ENCODE measurements at regions of chr4 and their contacts with region 1.

Region 1: DNA sequence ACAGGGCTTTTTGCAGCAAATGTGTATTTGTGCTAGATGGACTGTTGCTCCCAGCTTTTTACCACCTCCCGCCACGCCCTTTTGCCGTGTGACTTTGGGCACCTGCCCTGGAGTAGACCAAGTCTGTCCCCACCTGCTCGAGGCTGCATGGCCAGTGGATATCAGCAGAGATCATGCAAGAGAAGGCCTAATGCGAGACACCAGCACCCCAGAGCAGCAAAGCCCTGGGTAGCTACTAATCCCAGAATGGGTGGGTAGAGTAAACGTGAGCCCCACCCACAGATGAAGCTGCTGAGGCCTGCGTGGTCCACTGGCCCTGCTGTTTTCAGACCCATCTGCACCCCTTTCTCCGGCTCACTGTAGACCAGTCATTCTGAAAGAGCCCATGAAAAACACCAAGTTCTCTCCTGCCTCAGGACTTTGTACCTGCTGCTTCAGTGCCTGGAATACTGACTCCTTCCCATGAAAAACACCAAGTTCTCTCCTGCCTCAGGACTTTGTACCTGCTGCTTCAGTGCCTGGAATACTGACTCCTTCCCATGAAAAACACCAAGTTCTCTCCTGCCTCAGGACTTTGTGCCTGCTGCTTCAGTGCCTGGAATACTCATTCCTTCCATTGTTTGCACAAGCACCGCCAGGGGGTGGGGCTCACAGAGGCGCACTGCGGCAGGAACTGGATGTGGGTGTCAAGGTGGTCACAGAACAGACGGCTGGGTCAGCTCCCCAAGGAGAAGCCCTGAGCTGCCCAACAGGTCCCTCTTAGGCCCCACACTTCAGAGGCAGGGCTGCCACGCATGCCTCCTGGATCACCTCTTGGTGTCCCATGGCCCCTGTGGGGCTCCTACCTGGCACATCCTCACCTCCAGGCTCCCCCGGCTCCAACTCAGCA is 5.1 kb upstream of the TNIP2 start:
- DNase-seq: peak in 1 of 10 donors; percentile 30
- H3K4me3 ChIP-seq: no peak overlapping the region
- H3K27ac ChIP-seq: no peak overlapping the region
- H3K27me3 ChIP-seq: no peaks in the 10 kb centered on the region
- CTCF ChIP-seq: no peak

Region 2: DNA sequence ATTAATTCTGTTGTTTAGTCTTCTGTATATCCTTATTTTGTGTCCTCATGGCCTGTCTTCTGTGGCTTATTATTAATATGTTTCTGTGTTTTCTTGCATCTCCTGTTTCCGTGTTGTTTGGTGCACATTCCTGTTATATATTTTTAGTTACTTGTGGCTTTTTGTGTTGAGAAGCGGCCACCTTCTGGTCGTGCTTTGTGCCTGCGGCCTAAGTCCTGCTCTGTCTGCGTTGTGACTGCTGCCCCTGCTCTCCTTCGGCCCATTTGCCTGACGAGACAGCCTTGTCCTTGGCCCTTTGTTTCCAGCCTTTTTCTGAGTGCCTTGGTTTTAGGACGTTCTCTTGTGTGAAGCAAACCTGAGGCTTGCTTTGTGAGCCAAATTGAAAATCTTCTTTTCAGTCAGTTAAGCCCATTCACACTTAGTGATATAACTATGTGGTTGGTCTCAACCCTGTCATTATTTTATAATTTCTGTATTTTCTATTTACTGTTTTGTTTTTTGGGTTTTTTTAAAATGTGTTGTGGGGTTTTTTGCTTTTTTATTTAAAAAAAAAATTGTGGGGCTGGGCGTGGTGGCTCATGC is 48.9 kb before region 1 on chr4:
- intact Hi-C with region 1: no loop called
- DNase-seq: no peak
- H3K4me3 ChIP-seq: no peak overlapping the region
- H3K27ac ChIP-seq: no peak overlapping the region
- H3K27me3 ChIP-seq: no peaks in the 10 kb centered on the region
- CTCF ChIP-seq: peak in 1 of 56 donors; percentile 14

Region 3: DNA sequence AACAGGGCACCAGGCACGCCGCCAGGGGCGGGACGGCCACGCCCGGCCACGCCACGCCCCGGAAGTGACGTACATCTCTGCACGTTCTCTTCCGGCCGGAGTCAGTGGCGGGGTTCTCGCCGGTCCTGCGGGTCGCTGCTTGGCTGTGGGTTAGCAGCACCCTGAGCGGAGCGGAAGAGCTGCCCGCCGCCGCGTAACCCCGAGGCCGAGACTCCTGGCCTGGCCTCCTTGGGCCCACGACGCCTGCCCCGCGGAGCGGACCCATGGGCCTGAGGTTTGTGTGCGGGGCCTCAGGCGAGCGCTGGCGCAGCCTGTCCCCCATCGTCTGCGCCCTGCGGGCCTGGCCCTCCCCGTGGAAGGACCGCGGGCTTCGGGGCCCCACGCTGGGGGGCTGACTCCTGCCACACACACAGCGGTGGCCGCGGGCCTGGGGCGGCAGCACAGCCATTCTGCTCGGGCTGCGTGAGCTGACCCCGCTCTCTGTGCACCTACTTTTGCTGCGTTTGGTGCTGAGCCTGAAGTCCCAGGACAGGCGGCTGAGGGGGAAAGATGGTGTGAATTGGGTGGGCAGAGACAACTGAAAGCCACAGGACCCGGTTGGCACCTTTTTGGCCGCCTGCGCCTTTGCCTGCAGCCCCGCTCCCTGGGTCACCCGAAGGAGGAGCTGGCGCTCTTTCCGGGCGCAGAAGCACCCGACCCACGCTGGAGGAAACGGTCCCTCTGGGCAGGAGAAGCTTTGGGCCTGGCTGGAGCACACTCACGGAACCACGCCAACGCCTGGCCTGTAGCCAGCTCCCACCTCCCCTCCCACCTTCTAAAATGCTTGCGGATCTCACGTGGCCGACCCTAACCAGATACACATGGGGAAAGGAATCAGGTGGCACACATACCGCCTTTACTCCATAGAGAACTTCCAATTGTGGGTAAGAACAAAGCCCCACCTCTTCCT is 173.8 kb after region 1 on chr4:
- intact Hi-C with region 1: loop called (anchors 2 to 10 kb)
- DNase-seq: peak; percentile 82 to 94 (median 88)
- H3K4me3 ChIP-seq: peak overlapping the region; percentile 66 to 100 (median 95)
- H3K27ac ChIP-seq: peak overlapping the region in 57 of 59 donors; percentile 42 to 95 (median 83)
- H3K27me3 ChIP-seq: no peaks in the 10 kb centered on the region
- CTCF ChIP-seq: peak in 11 of 56 donors; percentile 3 to 28 (median 16)

Measured in dorsolateral prefrontal cortex (tissue), 120 donors.